ENCODE measurements at regions of chr3 and their contacts with region 1.

Region 1: GRCh38 chr3:48439820-48440589 is at the starts of genes CCDC51 and TMA7:
- DNase-seq: peak; percentile 99
- ATAC-seq: peak; percentile 96
- H3K4me3 Mint-ChIP-seq: peak within 1 kb of the TSS; percentile 97
- H3K27ac Mint-ChIP-seq: peak within 1 kb of the TSS; percentile 96
- H3K4me1 Mint-ChIP-seq: peaks cover 34% of the 10 kb centered on the region
- H3K27me3 Mint-ChIP-seq: no peaks in the 10 kb centered on the region
- total RNA-seq, gene CCDC51: 16.3 to 16.5 TPM
- total RNA-seq, gene TMA7: 339 to 364 TPM

Region 2: DNA sequence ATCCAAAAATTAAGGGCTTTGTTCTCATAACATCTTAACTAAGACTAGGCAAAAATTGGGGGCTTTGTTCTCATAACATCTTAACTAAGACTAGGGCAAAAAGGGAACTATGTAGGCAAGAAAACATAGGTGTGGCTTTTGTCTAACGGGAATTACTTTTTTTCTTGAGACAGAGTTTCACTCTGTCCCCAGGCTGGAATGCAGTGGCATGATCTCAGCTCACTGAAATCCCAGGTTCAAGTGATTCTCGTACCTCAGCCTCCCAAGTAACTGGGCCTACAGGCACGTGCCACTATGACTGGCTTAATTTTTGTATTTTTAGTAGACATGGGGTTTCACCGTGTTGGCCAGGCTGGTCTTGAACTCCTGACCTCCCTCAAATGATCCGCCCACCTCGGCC is 811.6 kb before region 1 on chr3:
- CTCF ChIA-PET with region 1: no interaction called
- POLR2A ChIA-PET with region 1: no interaction called
- DNase-seq: no peak
- ATAC-seq: no peak
- H3K4me3 Mint-ChIP-seq: no peak overlapping the region
- H3K27ac Mint-ChIP-seq: no peak overlapping the region
- H3K4me1 Mint-ChIP-seq: no peaks in the 10 kb centered on the region
- H3K27me3 Mint-ChIP-seq: no peaks in the 10 kb centered on the region

Region 3: GRCh38 chr3:48232734-48233133 is 207.3 kb before region 1 on chr3:
- CTCF ChIA-PET with region 1: interaction called, 79 read pairs
- POLR2A ChIA-PET with region 1: no interaction called
- DNase-seq: peak; percentile 76
- ATAC-seq: peak; percentile 98
- H3K4me3 Mint-ChIP-seq: no peak overlapping the region
- H3K27ac Mint-ChIP-seq: no peak overlapping the region
- H3K4me1 Mint-ChIP-seq: peaks cover 7% of the 10 kb centered on the region
- H3K27me3 Mint-ChIP-seq: no peaks in the 10 kb centered on the region

Region 4: DNA sequence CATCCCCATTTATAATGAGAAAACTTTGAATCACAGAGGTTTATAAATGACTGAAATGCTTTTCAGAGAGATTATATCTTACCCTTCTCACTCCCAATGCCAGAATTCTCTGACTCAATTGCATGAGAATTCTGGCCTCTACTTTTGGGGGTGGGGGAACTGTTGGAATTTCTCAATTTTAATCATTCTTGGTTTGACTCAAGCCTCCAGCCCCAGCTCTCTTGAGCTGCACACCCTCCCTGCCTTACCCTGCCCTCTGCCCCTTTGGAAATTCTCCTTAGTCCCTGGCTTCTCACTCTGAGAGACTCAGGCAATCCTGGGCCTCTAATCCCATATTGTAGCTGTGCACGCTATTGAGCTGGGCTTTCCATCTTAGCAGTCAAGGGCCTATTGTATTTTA is 154.9 kb before region 1 on chr3:
- CTCF ChIA-PET with region 1: interaction called, 319 read pairs
- POLR2A ChIA-PET with region 1: no interaction called
- DNase-seq: no peak
- ATAC-seq: no peak
- H3K4me3 Mint-ChIP-seq: no peak overlapping the region
- H3K27ac Mint-ChIP-seq: no peak overlapping the region
- H3K4me1 Mint-ChIP-seq: peaks cover 2% of the 10 kb centered on the region
- H3K27me3 Mint-ChIP-seq: no peaks in the 10 kb centered on the region

Region 5: DNA sequence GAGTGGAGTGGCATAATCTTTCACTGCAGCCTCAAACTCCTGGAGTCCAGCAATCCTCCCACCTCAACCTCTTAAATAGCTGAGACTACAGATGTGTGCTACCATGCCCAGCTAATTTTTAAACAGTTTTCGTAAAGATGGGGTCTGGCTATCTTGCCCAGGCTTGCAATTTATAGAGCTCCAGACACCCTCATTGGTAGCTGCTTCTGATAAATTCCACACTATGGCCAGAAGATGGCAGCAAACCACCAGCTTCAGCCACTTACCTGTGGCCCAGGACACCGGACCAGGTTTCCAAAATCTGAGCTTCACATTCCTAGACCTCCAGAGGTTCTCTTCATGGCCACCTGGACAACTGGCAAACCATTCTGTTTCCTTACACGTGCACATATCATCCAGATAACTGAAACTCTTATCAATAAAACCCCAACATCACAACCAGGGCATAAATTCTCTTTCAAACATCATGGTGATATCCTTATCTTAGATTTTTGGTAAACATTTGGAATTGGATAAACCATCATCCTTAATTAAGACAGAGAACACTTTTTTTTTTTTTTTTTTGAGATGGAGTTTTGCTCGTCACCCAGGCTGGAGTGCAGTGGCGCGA is 39.1 kb before region 1 on chr3:
- CTCF ChIA-PET with region 1: interaction called, 342 read pairs
- POLR2A ChIA-PET with region 1: interaction called, 4 read pairs
- DNase-seq: peak; percentile 76
- ATAC-seq: peak; percentile 88
- H3K4me3 Mint-ChIP-seq: no peak overlapping the region
- H3K27ac Mint-ChIP-seq: no peak overlapping the region
- H3K4me1 Mint-ChIP-seq: peaks cover 2% of the 10 kb centered on the region
- H3K27me3 Mint-ChIP-seq: peaks cover under 1% of the 10 kb centered on the region

Region 6: GRCh38 chr3:48472915-48473616 is 33.1 kb after region 1 on chr3:
- CTCF ChIA-PET with region 1: interaction called, 57 read pairs
- POLR2A ChIA-PET with region 1: interaction called, 24 read pairs
- DNase-seq: peak; percentile 98
- ATAC-seq: peak; percentile 88
- H3K4me3 Mint-ChIP-seq: peak overlapping the region; percentile 93
- H3K27ac Mint-ChIP-seq: peak overlapping the region; percentile 100
- H3K4me1 Mint-ChIP-seq: peaks cover 73% of the 10 kb centered on the region
- H3K27me3 Mint-ChIP-seq: no peaks in the 10 kb centered on the region

Region 7: DNA sequence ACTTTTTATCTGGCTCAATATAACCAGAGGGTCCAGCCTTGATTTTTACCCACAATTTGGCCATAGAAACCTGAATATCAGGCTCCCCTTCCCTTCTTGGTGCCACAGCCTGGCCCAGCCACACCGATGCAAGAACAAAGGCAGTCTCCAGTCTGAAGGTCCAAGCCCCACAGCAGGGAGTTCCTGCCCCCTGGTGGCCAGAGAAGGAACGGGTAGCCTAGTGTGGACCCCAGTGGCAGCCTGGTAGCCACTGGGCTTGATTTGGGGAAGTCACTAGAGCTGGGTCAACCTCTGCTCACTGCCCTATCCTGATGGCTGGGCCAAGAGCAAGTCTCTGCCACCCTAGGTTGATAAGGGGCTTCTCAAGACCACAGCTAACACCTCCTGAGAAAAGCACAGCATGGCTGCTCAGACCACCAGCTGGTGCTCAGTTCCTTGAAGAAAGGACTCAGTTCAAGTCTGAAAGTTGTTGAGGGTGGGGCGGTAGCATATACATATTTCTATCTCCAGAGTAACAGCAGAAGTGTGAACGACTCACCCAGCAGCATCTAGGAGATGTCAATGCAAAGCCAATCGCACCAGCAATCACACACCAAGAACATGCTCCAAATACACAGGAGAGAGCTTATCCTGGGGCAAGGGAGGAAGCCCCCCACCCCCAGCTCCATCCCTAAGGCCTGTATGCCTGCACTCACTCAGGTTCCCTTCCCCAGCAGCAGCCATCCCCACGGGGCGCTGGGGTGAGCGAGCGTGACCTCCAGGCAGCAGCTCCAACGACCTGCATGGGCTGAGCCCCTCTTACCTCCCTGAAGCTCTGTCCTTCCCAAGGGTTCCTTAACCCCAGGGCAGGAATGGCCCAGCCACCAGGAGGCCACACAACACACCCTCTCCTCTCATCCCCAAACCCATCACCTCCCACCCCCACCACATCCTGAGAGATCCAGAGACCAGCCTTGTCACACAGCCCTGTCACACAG is 109.0 kb after region 1 on chr3:
- CTCF ChIA-PET with region 1: interaction called, 46 read pairs
- POLR2A ChIA-PET with region 1: interaction called, 8 read pairs
- DNase-seq: peak; percentile 90
- ATAC-seq: peak; percentile 97
- H3K4me3 Mint-ChIP-seq: no peak overlapping the region
- H3K27ac Mint-ChIP-seq: peak overlapping the region; percentile 49
- H3K4me1 Mint-ChIP-seq: peaks cover 28% of the 10 kb centered on the region
- H3K27me3 Mint-ChIP-seq: no peaks in the 10 kb centered on the region